MCF 10A (cell line): ENCODE measurements at regions of chr2 and their contacts with region 1.

Region 1: GRCh38 chr2:95231723-95232122 is 24.4 kb downstream of the ZNF892 start:
- DNase-seq: peak; percentile 89
- H3K4me3 Mint-ChIP-seq: no peak overlapping the region
- H3K27ac Mint-ChIP-seq: peak overlapping the region; percentile 54
- H3K4me1 Mint-ChIP-seq: peaks cover 18% of the 10 kb centered on the region
- H3K27me3 Mint-ChIP-seq: no peaks in the 10 kb centered on the region
- CTCF ChIP-seq: peak; percentile 95

Region 2: GRCh38 chr2:94939349-94939748 is 292.4 kb before region 1 on chr2:
- CTCF ChIA-PET with region 1: no interaction called
- POLR2A ChIA-PET with region 1: no interaction called
- intact Hi-C with region 1: no loop called
- DNase-seq: no peak
- H3K4me3 Mint-ChIP-seq: no peak overlapping the region
- H3K27ac Mint-ChIP-seq: no peak overlapping the region
- H3K4me1 Mint-ChIP-seq: no peaks in the 10 kb centered on the region
- H3K27me3 Mint-ChIP-seq: peaks cover 98% of the 10 kb centered on the region
- CTCF ChIP-seq: no peak

Region 3: GRCh38 chr2:95259765-95260417 is 28.2 kb after region 1 on chr2:
- CTCF ChIA-PET with region 1: interaction called, 28 read pairs
- POLR2A ChIA-PET with region 1: interaction called, 6 read pairs
- intact Hi-C with region 1: no loop called
- DNase-seq: peak; percentile 82
- H3K4me3 Mint-ChIP-seq: peak overlapping the region; percentile 9
- H3K27ac Mint-ChIP-seq: peak overlapping the region; percentile 71
- H3K4me1 Mint-ChIP-seq: peaks cover 27% of the 10 kb centered on the region
- H3K27me3 Mint-ChIP-seq: no peaks in the 10 kb centered on the region
- CTCF ChIP-seq: no peak

Region 4: GRCh38 chr2:95277246-95277906 is 45.7 kb after region 1 on chr2:
- CTCF ChIA-PET with region 1: interaction called, 48 read pairs
- POLR2A ChIA-PET with region 1: interaction called, 7 read pairs
- intact Hi-C with region 1: no loop called
- DNase-seq: peak; percentile 90
- H3K4me3 Mint-ChIP-seq: peak overlapping the region; percentile 55
- H3K27ac Mint-ChIP-seq: peak overlapping the region; percentile 63
- H3K4me1 Mint-ChIP-seq: peaks cover 31% of the 10 kb centered on the region
- H3K27me3 Mint-ChIP-seq: no peaks in the 10 kb centered on the region
- CTCF ChIP-seq: no peak

Region 5: DNA sequence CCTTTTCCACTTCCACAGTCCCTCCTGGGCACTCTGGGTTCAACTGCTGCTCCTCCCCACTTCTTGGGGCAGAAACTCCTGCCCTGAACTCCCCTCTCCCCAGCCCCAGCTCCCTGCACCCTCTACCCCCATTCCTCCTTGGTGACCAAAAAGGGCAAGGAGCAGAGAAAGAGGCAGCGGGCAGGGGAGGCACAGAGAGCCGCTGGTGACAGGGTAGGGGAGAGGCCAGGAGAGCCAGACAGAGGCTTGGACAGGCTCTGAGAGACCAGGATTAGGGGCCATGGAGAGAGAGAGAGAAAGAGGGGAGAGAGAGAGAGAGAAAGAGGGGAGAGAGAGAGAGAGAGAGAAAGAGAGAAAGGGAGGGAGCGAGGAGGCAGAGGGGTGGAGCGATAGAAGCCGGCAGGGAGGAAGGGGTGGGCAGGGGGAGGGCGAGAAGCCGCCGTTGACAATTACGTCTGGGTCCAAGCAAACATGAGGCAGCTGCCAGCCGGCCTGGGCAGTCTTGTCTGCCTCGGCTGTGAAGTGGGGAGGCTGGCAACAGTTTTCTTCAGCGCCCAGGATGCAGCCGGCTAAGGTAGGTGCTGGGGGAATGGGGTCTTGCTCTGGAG is 65.3 kb after region 1 on chr2 and contains the start of gene KCNIP3:
- CTCF ChIA-PET with region 1: interaction called, 22 read pairs
- POLR2A ChIA-PET with region 1: interaction called, 6 read pairs
- intact Hi-C with region 1: no loop called
- DNase-seq: no peak
- H3K4me3 Mint-ChIP-seq: no peak within 1 kb of the TSS
- H3K27ac Mint-ChIP-seq: no peak within 1 kb of the TSS
- H3K4me1 Mint-ChIP-seq: peaks cover 15% of the 10 kb centered on the region
- H3K27me3 Mint-ChIP-seq: peaks cover 12% of the 10 kb centered on the region
- CTCF ChIP-seq: no peak
- total RNA-seq, gene KCNIP3: 9.5 and 15.6 TPM in 2 replicates

Region 6: GRCh38 chr2:95323347-95324185 is 91.8 kb after region 1 on chr2:
- CTCF ChIA-PET with region 1: interaction called, 323 read pairs
- POLR2A ChIA-PET with region 1: no interaction called
- intact Hi-C with region 1: no loop called
- DNase-seq: peak; percentile 80
- H3K4me3 Mint-ChIP-seq: no peak overlapping the region
- H3K27ac Mint-ChIP-seq: no peak overlapping the region
- H3K4me1 Mint-ChIP-seq: peaks cover 10% of the 10 kb centered on the region
- H3K27me3 Mint-ChIP-seq: no peaks in the 10 kb centered on the region
- CTCF ChIP-seq: peak; percentile 76

Region 7: DNA sequence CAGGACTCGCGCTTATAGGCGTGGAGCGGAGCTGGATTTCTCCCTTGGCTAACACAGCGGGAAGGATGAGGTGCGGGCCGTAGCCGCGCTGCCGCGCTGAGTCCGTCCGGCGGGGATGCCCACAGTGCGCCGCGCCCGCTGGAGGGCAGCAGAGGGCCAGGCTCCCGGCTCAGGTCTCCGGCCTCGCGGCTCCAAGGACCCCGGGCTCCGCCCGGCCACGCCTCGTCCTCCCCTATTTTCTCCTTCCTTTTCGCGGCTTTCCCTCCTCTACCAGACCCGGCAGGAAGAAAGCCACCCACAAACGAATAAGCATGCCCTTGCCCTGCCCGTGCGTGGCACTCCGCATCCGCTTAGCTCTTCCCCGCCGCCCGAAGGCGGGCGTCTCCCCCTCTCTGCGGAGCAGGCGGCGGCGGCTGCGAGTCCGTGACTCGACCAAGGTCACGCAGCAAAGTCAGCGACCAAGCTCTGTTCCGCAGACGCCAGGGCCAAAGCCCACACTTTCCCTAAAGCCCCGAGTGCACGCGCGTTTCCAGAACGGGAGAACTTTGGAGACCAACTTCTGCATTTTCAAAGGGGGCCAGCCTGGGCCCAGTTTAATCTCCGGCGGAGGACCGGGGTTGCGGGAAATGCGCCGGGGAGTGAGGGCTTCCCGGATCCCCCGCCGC is 114.0 kb after region 1 on chr2:
- CTCF ChIA-PET with region 1: interaction called, 45 read pairs
- POLR2A ChIA-PET with region 1: interaction called, 9 read pairs
- intact Hi-C with region 1: loop called (anchors 1 kb)
- DNase-seq: peak; percentile 84
- H3K4me3 Mint-ChIP-seq: peak overlapping the region; percentile 84
- H3K27ac Mint-ChIP-seq: peak overlapping the region; percentile 53
- H3K4me1 Mint-ChIP-seq: peaks cover 24% of the 10 kb centered on the region
- H3K27me3 Mint-ChIP-seq: no peaks in the 10 kb centered on the region
- CTCF ChIP-seq: peak; percentile 91

Region 8: GRCh38 chr2:95728878-95729596 is 497.3 kb after region 1 on chr2:
- CTCF ChIA-PET with region 1: interaction called, 22 read pairs
- POLR2A ChIA-PET with region 1: no interaction called
- intact Hi-C with region 1: loop called (anchors 1 kb)
- DNase-seq: peak; percentile 73
- H3K4me3 Mint-ChIP-seq: no peak overlapping the region
- H3K27ac Mint-ChIP-seq: no peak overlapping the region
- H3K4me1 Mint-ChIP-seq: no peaks in the 10 kb centered on the region
- H3K27me3 Mint-ChIP-seq: peaks cover 17% of the 10 kb centered on the region
- CTCF ChIP-seq: peak; percentile 73